ENCODE measurements at regions of chr2 and their contacts with region 1.

Region 1: DNA sequence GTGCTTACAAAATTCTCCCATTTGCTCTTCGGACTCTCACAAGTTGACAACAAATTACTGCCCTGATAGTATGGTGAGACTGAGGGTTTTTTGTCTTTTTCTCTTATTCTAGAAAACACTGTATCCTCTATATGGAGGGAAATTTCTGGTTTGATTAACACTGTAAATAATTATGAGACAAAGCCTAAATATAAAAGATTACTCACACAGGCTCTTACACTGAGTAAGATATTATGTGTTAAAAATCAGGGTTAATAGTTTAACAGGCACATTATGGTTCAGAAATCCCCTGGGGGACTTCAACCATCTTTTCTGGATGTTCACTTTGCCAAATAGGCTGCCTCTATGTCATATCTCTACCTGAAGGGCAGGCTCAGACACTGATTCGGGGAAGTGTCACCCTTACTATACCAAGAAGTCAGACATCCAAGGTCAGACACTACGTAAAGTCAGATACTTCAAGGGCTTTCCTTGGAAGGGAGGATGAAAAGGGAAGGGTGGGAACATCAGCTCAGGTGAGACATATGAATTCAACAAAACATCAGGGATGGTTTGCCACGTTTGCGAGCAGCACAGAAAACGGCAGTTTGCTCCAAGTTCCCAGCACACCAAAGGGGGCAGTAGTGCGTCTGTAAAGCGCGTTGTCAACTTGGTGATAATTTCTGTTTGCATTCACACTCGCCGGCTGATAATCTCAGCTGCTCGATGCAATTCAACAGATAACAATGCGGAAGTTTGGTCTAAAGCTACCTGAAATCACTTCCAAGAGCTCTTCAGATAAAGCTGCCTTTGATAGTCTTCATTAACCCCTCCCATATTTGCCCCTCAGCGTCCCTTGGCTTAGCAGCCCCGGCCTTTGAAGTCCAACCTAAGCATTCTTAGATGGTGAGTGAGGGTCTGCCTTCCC is 972 bp upstream of the RASGRP3 start:
- DNase-seq: peak; percentile 68 to 93 (median 82)
- ATAC-seq: peak; percentile 78
- H3K4me3 ChIP-seq: peak overlapping the region; percentile 70
- H3K4me3 Mint-ChIP-seq: peak overlapping the region; percentile 98
- H3K27ac ChIP-seq: peak overlapping the region; percentile 88 to 91
- H3K27ac Mint-ChIP-seq: peak overlapping the region; percentile 98
- H3K4me1 ChIP-seq: peaks cover 21% of the 10 kb centered on the region
- H3K4me1 Mint-ChIP-seq: peaks cover 25% of the 10 kb centered on the region
- H3K27me3 ChIP-seq: no peaks in the 10 kb centered on the region
- H3K27me3 Mint-ChIP-seq: no peaks in the 10 kb centered on the region
- CTCF ChIP-seq: peak; percentile 75

Region 2: DNA sequence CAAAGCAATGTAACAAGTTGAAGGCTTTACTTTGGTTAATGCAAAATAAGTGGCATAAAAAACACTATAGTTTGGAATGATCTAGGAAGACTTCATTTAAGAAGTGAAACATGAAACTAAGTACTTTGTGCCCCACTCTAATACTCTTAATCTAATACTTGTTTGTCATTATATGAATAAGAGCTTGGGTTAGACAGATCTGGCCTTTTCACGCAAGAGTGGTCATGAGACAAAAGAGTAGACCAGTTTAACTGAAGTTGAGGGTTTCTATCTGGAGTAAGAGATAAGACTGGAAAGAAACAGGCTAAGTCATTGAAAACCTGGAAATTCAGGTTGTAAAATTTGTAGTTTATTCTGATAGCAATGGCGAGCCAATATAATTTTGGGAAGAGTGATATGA is 1307.0 kb before region 1 on chr2:
- CTCF ChIA-PET with region 1: no interaction called
- POLR2A ChIA-PET with region 1: no interaction called
- intact Hi-C with region 1: loop called in 1 of 2 experiments (anchors 10 kb)
- DNase-seq: no peak
- ATAC-seq: no peak
- H3K4me3 ChIP-seq: no peak overlapping the region
- H3K4me3 Mint-ChIP-seq: no peak overlapping the region
- H3K27ac ChIP-seq: no peak overlapping the region
- H3K27ac Mint-ChIP-seq: peak overlapping the region; percentile 29
- H3K4me1 ChIP-seq: peaks cover 12% of the 10 kb centered on the region
- H3K4me1 Mint-ChIP-seq: peaks cover 53% of the 10 kb centered on the region
- H3K27me3 ChIP-seq: no peaks in the 10 kb centered on the region
- H3K27me3 Mint-ChIP-seq: no peaks in the 10 kb centered on the region
- CTCF ChIP-seq: no peak

Region 3: DNA sequence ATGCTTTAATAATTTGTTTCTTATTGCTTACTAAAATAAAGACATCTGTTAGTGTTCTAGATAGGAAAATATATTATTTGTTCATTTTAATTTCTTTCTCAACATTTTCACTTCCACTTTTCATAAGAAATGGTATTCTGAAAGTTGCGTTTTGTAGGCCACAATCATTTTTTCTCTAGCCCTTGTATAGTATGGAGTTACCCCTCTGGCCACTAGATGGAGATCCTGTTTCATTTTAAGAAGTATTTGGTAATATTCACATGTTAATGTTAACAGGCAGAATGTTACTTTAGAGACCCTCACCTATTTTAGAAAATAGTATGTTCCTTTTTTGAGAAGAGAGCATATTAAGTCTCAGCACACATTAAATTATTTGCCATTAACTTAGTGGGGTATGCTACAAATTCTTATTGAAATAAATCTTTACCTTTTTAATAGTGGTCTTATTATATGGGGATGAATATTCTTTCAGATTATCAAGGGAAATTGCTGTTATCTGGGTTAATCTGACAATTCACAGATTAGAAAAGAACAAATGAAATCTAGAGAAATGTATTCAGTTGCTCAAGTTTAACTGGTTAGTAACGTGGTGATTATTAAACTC is 921.5 kb before region 1 on chr2:
- CTCF ChIA-PET with region 1: no interaction called
- POLR2A ChIA-PET with region 1: no interaction called
- intact Hi-C with region 1: loop called in 1 of 2 experiments (anchors 10 kb)
- DNase-seq: peak in 2 of 9 experiments; percentile 43 to 57
- ATAC-seq: peak; percentile 55
- H3K4me3 ChIP-seq: no peak overlapping the region
- H3K4me3 Mint-ChIP-seq: no peak overlapping the region
- H3K27ac ChIP-seq: no peak overlapping the region
- H3K27ac Mint-ChIP-seq: no peak overlapping the region
- H3K4me1 ChIP-seq: no peaks in the 10 kb centered on the region
- H3K4me1 Mint-ChIP-seq: no peaks in the 10 kb centered on the region
- H3K27me3 ChIP-seq: no peaks in the 10 kb centered on the region
- H3K27me3 Mint-ChIP-seq: no peaks in the 10 kb centered on the region
- CTCF ChIP-seq: peak; percentile 81

Region 4: GRCh38 chr2:33494155-33494779 is 18.8 kb after region 1 on chr2:
- CTCF ChIA-PET with region 1: interaction called, 11 read pairs
- POLR2A ChIA-PET with region 1: no interaction called
- intact Hi-C with region 1: loop called in 1 of 2 experiments (anchors 2 kb)
- DNase-seq: no peak
- ATAC-seq: no peak
- H3K4me3 ChIP-seq: no peak overlapping the region
- H3K4me3 Mint-ChIP-seq: no peak overlapping the region
- H3K27ac ChIP-seq: no peak overlapping the region
- H3K27ac Mint-ChIP-seq: no peak overlapping the region
- H3K4me1 ChIP-seq: peaks cover 4% of the 10 kb centered on the region
- H3K4me1 Mint-ChIP-seq: peaks cover 17% of the 10 kb centered on the region
- H3K27me3 ChIP-seq: peaks cover 0 to 3% of the 10 kb centered on the region in 2 experiments
- H3K27me3 Mint-ChIP-seq: peaks cover under 1% of the 10 kb centered on the region
- CTCF ChIP-seq: no peak

Region 5: GRCh38 chr2:33599175-33599942 is 123.9 kb after region 1 on chr2 and contains the start of gene FAM98A:
- CTCF ChIA-PET with region 1: interaction called, 13 read pairs
- POLR2A ChIA-PET with region 1: interaction called, 14 read pairs
- intact Hi-C with region 1: loop called (anchors 1 to 2 kb)
- DNase-seq: peak; percentile 96 to 100 (median 99)
- ATAC-seq: peak; percentile 91
- H3K4me3 ChIP-seq: peak within 1 kb of the TSS; percentile 92 to 94
- H3K4me3 Mint-ChIP-seq: peak within 1 kb of the TSS; percentile 99
- H3K27ac ChIP-seq: peak within 1 kb of the TSS; percentile 83 to 85
- H3K27ac Mint-ChIP-seq: peak within 1 kb of the TSS; percentile 96
- H3K4me1 ChIP-seq: peaks cover 22% of the 10 kb centered on the region
- H3K4me1 Mint-ChIP-seq: peaks cover 34% of the 10 kb centered on the region
- H3K27me3 ChIP-seq: no peaks in the 10 kb centered on the region
- H3K27me3 Mint-ChIP-seq: no peaks in the 10 kb centered on the region
- CTCF ChIP-seq: no peak
- total RNA-seq, gene FAM98A: 15.9 to 21.0 TPM

Region 6: DNA sequence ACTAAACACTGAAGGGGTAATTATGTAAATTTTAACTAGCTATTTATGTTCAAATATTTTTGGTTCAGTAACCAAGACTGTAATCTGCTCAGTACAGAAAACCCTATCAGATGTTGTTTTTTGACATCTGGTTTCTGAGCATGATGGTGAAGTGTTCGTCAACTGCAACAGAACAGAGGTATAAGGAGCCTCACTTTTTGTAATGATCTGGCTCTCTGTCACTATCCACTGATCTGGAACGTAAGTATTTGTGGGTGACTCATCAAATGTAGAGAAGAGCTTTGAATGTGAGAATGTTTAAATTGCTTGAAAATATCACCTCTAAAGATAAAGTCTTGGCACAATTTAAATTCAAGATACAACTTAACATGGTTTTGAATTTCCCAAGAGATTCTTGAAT is 337.2 kb after region 1 on chr2:
- CTCF ChIA-PET with region 1: no interaction called
- POLR2A ChIA-PET with region 1: no interaction called
- intact Hi-C with region 1: no loop called
- DNase-seq: no peak
- ATAC-seq: no peak
- H3K4me3 ChIP-seq: no peak overlapping the region
- H3K4me3 Mint-ChIP-seq: no peak overlapping the region
- H3K27ac ChIP-seq: no peak overlapping the region
- H3K27ac Mint-ChIP-seq: no peak overlapping the region
- H3K4me1 ChIP-seq: no peaks in the 10 kb centered on the region
- H3K4me1 Mint-ChIP-seq: no peaks in the 10 kb centered on the region
- H3K27me3 ChIP-seq: no peaks in the 10 kb centered on the region
- H3K27me3 Mint-ChIP-seq: no peaks in the 10 kb centered on the region
- CTCF ChIP-seq: no peak

Measured in CD8-positive, alpha-beta T cell (primary cell).